Endothelial cell of umbilical vein (primary cell): ENCODE measurements at regions of chr15 and their contacts with region 1.

Region 1: GRCh38 chr15:74956648-74957300 is at the start of gene RPP25:
- DNase-seq: peak; percentile 76
- H3K4me3 ChIP-seq: peak within 1 kb of the TSS; percentile 44 to 56 (median 53)
- H3K27ac ChIP-seq: peak within 1 kb of the TSS; percentile 46
- H3K4me1 ChIP-seq: peaks cover 58% of the 10 kb centered on the region
- H3K27me3 ChIP-seq: peaks cover 0 to 3% of the 10 kb centered on the region in 2 experiments
- CTCF ChIP-seq: no peak
- POLR2A ChIP-seq: peak; percentile 80
- total RNA-seq, gene RPP25: 13.7 and 13.8 TPM in 2 replicates

Region 2: DNA sequence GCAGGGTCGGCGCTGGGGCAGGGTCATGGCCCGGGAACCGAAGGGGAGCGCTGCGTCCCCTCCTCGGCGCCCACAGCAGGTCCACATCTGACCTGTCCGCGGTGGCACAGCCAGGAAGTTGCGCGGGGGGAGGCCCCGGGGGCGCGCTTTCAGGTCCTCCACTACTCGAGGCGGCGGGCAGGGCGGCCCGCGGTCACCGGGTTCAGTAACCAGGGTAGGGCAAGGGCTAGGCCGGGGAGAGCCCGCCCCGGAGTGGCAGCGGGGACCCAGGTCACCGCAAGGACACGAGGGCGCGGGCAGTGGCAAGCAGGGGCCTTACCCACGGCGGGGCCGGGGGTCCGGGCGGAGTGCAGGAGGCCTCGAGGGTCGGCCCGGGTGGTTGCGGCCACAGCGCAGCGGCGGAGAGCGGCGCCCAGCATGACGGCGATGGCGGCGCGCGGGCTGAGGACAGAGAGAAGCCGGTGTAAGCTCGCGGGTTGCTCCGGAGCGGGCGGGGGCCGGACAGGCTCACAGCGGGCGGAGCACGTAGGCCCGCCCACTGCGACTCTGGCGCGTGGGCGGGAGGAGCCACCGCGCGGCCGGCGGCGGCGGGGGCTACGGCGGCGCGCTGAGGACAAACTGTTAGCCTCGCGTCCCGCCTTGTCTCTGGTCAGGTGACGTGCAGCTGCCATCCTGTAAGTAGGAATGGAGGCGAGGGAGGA is 19.0 kb before region 1 on chr15 and contains the start of gene COX5A:
- CTCF ChIA-PET with region 1: interaction called, 11 read pairs
- POLR2A ChIA-PET with region 1: interaction called, 3 read pairs
- dilution Hi-C with region 1: no loop called
- intact Hi-C with region 1: loop called (anchors 2 kb)
- DNase-seq: peak; percentile 98
- H3K4me3 ChIP-seq: peak within 1 kb of the TSS; percentile 92 to 99 (median 99)
- H3K27ac ChIP-seq: peak within 1 kb of the TSS; percentile 60
- H3K4me1 ChIP-seq: peaks cover 7% of the 10 kb centered on the region
- H3K27me3 ChIP-seq: no peaks in the 10 kb centered on the region
- CTCF ChIP-seq: no peak
- POLR2A ChIP-seq: peak; percentile 82
- total RNA-seq, gene COX5A: 220 and 232 TPM in 2 replicates

Region 3: GRCh38 chr15:74988007-74988800 is 31.4 kb after region 1 on chr15:
- CTCF ChIA-PET with region 1: interaction called, 12 read pairs
- POLR2A ChIA-PET with region 1: interaction called, 3 read pairs
- dilution Hi-C with region 1: no loop called
- intact Hi-C with region 1: loop called (anchors 1 kb)
- DNase-seq: peak; percentile 53
- H3K4me3 ChIP-seq: no peak overlapping the region
- H3K27ac ChIP-seq: no peak overlapping the region
- H3K4me1 ChIP-seq: peaks cover 4% of the 10 kb centered on the region
- H3K27me3 ChIP-seq: peaks cover 6% of the 10 kb centered on the region in 2 experiments
- CTCF ChIP-seq: peak; percentile 51 to 70
- POLR2A ChIP-seq: no peak

Region 4: GRCh38 chr15:74995241-74995778 is 38.5 kb after region 1 on chr15 and contains the start of gene SCAMP5:
- CTCF ChIA-PET with region 1: interaction called, 12 read pairs
- POLR2A ChIA-PET with region 1: interaction called, 4 read pairs
- dilution Hi-C with region 1: no loop called
- intact Hi-C with region 1: no loop called
- DNase-seq: peak; percentile 79
- H3K4me3 ChIP-seq: peak within 1 kb of the TSS; percentile 24 to 75 (median 61)
- H3K27ac ChIP-seq: no peak within 1 kb of the TSS
- H3K4me1 ChIP-seq: peaks cover 15% of the 10 kb centered on the region
- H3K27me3 ChIP-seq: peaks cover 11 to 20% of the 10 kb centered on the region in 2 experiments
- CTCF ChIP-seq: no peak
- POLR2A ChIP-seq: no peak
- total RNA-seq, gene SCAMP5: 1.9 and 4.4 TPM in 2 replicates